ENCODE measurements at regions of chr12 and their contacts with region 1.

Region 1: DNA sequence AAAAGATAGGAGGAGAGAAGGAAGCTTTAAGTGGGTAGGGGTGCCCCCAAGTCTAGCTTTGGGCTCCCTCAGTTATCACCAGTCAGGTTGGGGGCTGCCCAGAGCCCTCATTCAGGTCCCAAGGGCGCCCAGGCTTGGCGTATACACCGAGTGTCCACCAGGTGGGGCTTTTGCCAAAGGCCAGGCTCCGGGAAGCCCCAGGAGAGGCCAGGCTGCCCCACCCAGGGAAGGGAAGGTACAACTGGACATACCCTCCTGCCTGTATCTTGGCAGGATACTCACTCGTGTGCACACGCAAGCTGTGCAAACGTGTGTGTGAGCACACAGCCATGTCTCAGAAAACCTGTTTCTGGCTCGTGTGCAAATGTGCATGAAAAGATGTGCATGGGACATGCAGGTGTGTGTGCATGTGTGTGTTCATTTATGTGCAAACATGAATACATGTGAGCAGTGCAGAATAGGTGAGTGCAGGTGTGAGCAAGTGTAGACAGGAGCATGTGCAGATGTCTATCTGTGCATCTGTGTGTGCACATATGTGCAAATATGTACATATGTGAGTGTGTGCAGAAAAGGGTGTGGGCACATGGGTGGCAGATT is 103.9 kb upstream of the MYL2 start:
- DNase-seq: peak; percentile 4
- ATAC-seq: peak; percentile 97
- H3K4me3 ChIP-seq: no peak overlapping the region
- H3K27ac ChIP-seq: no peak overlapping the region
- H3K4me1 ChIP-seq: no peaks in the 10 kb centered on the region
- H3K27me3 ChIP-seq: peaks cover 0 to 1% of the 10 kb centered on the region in 2 experiments; a peak in 1 of 4 replicates
- CTCF ChIP-seq: peak; percentile 80 to 86 (median 80)
- EP300 ChIP-seq: no peak
- POLR2A ChIP-seq: no peak
- RAD21 ChIP-seq: peak; percentile 93

Region 2: GRCh38 chr12:111074559-111074958 is 50.3 kb after region 1 on chr12:
- CTCF ChIA-PET with region 1: no interaction called
- POLR2A ChIA-PET with region 1: no interaction called
- RAD21 ChIA-PET with region 1: no interaction called
- SMC1A ChIA-PET with region 1: no interaction called
- in situ Hi-C with region 1: no loop called
- intact Hi-C with region 1: no loop called
- DNase-seq: no peak
- ATAC-seq: no peak
- H3K4me3 ChIP-seq: no peak overlapping the region
- H3K27ac ChIP-seq: no peak overlapping the region
- H3K4me1 ChIP-seq: no peaks in the 10 kb centered on the region
- H3K27me3 ChIP-seq: no peaks in the 10 kb centered on the region; a peak in 2 of 4 replicates
- CTCF ChIP-seq: no peak
- EP300 ChIP-seq: no peak
- POLR2A ChIP-seq: no peak
- RAD21 ChIP-seq: no peak

Region 3: GRCh38 chr12:111174251-111174960 is 150.1 kb after region 1 on chr12:
- CTCF ChIA-PET with region 1: interaction called, 3 read pairs
- POLR2A ChIA-PET with region 1: no interaction called
- RAD21 ChIA-PET with region 1: no interaction called
- SMC1A ChIA-PET with region 1: no interaction called
- in situ Hi-C with region 1: no loop called
- intact Hi-C with region 1: loop called (anchors 10 kb)
- DNase-seq: no peak
- ATAC-seq: no peak
- H3K4me3 ChIP-seq: no peak overlapping the region
- H3K27ac ChIP-seq: no peak overlapping the region
- H3K4me1 ChIP-seq: no peaks in the 10 kb centered on the region
- H3K27me3 ChIP-seq: no peaks in the 10 kb centered on the region; a peak in 1 of 4 replicates
- CTCF ChIP-seq: peak; percentile 28 to 40 (median 30); a peak in 3 of 6 replicates
- EP300 ChIP-seq: no peak
- POLR2A ChIP-seq: no peak
- RAD21 ChIP-seq: peak; percentile 65

Region 4: DNA sequence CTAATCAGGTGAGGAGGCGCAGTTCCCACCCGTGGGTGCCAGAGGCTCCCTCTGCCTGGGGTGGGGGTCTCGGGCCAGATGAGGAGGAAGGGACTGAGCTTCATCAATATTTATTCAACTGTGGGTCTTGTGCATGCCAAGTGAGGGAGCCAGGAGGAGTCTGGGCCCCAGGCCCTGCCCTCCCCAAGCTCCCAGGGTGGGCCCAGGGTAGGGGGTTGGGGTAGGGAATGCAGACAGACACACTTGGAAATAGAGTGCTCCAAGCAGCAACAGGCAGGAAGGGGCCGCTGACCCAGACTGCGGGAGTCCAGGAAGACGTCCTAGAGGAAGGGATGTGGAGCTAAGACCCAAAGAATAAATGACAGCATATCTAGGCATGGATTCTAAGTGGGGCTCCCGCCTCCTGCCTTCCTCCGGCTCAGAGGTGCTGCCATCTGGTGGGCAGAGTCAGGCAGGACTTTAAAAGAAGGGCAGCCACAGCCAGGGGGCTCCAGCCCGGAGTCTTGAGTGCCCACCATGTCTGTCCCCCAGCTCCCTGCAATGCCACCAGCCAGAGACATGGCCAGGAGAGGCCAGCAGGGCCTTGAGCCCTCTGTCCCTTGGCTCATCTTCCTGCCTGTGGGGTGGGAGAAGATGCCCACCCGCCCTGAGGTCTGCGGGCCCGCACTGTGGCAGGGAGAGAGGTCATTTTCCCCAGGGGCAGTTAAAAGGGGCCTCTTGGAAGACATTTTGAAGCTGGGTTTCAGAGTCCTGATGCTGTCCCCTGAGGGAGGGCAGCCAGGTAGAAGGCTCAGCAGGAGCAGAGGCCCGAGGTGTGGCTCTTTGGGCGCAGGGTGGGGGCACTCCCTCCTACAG is 274.5 kb after region 1 on chr12:
- CTCF ChIA-PET with region 1: interaction called, 16 read pairs
- POLR2A ChIA-PET with region 1: no interaction called
- RAD21 ChIA-PET with region 1: no interaction called
- SMC1A ChIA-PET with region 1: interaction called, 3 read pairs
- in situ Hi-C with region 1: no loop called
- intact Hi-C with region 1: loop called (anchors 2 kb)
- DNase-seq: no peak
- ATAC-seq: peak; percentile 92
- H3K4me3 ChIP-seq: no peak overlapping the region
- H3K27ac ChIP-seq: no peak overlapping the region
- H3K4me1 ChIP-seq: peaks cover 1% of the 10 kb centered on the region; the same call in 1 of the 2 replicates
- H3K27me3 ChIP-seq: no peaks in the 10 kb centered on the region
- CTCF ChIP-seq: peak; percentile 76 to 81 (median 80)
- EP300 ChIP-seq: no peak
- POLR2A ChIP-seq: no peak
- RAD21 ChIP-seq: peak; percentile 60

Region 5: GRCh38 chr12:111313833-111314259 is 289.5 kb after region 1 on chr12:
- CTCF ChIA-PET with region 1: interaction called, 5 read pairs
- POLR2A ChIA-PET with region 1: no interaction called
- RAD21 ChIA-PET with region 1: no interaction called
- SMC1A ChIA-PET with region 1: no interaction called
- in situ Hi-C with region 1: loop called (anchors 5 kb)
- intact Hi-C with region 1: loop called (anchors 1 kb)
- DNase-seq: no peak
- ATAC-seq: peak; percentile 85
- H3K4me3 ChIP-seq: no peak overlapping the region
- H3K27ac ChIP-seq: no peak overlapping the region
- H3K4me1 ChIP-seq: no peaks in the 10 kb centered on the region
- H3K27me3 ChIP-seq: no peaks in the 10 kb centered on the region
- CTCF ChIP-seq: peak; percentile 86 to 92 (median 90)
- EP300 ChIP-seq: no peak
- POLR2A ChIP-seq: no peak
- RAD21 ChIP-seq: peak; percentile 78

Region 6: GRCh38 chr12:112001576-112001975 is 977.3 kb after region 1 on chr12:
- CTCF ChIA-PET with region 1: no interaction called
- POLR2A ChIA-PET with region 1: no interaction called
- RAD21 ChIA-PET with region 1: no interaction called
- SMC1A ChIA-PET with region 1: no interaction called
- in situ Hi-C with region 1: no loop called
- intact Hi-C with region 1: no loop called
- DNase-seq: no peak
- ATAC-seq: no peak
- H3K4me3 ChIP-seq: no peak overlapping the region
- H3K27ac ChIP-seq: no peak overlapping the region
- H3K4me1 ChIP-seq: peaks cover 18% of the 10 kb centered on the region
- H3K27me3 ChIP-seq: no peaks in the 10 kb centered on the region
- CTCF ChIP-seq: no peak
- EP300 ChIP-seq: no peak
- POLR2A ChIP-seq: no peak
- RAD21 ChIP-seq: no peak